Body of pancreas (tissue), 4 donors: ENCODE measurements at regions of chr16 and their contacts with region 1.

Region 1: DNA sequence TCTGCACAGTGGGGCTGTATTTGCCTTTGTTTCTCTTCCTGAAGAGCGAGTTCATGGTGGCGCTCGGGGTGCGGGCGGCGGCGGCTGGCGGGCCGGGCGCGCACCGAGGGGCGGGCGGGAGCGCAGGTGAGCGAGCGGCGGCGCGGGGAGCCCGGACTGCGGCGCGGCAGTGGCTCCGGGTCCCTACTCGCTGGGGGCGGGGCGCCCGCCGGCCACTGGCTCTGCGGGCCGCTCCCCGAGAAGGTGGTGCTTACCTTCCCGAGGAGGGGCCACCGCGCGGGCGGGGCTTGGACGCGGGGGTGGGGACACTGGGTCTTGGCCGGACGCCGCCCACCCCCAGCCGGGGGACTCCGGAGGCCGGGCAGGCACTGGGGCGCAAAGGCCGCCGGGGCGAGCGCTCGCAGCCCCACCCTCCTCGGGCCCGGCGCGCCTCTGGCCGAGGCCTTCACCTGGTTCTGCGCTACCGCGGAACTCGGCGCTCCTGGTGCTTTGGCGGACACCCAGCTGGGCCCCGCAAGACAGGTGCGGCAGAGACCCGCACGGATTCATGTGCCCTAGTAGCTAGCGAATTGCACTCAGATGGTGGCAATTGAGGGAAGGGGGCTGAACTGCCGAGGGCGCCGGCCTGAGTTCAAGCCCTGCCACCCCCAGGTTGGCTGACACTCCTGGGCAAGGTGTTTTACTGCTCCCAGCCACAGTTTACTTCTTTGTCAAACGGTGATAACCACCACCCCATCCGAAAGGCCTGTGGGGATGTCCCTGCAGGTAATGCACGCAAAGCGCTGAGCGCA is at the start of gene PPL:
- DNase-seq: peak; percentile 96 to 98 (median 96)
- ATAC-seq: peak; percentile 92
- H3K4me3 ChIP-seq: peak within 1 kb of the TSS; percentile 46 to 77
- H3K27ac ChIP-seq: peak within 1 kb of the TSS; percentile 70 to 89 (median 81)
- H3K4me1 ChIP-seq: peaks cover 42% of the 10 kb centered on the region
- H3K27me3 ChIP-seq: no peaks in the 10 kb centered on the region
- CTCF ChIP-seq: peak in 1 of 7 experiments; percentile 1
- POLR2A ChIP-seq: peak; percentile 60 to 78 (median 71)
- total RNA-seq, gene PPL: 20.2 to 26.0 TPM

Region 2: DNA sequence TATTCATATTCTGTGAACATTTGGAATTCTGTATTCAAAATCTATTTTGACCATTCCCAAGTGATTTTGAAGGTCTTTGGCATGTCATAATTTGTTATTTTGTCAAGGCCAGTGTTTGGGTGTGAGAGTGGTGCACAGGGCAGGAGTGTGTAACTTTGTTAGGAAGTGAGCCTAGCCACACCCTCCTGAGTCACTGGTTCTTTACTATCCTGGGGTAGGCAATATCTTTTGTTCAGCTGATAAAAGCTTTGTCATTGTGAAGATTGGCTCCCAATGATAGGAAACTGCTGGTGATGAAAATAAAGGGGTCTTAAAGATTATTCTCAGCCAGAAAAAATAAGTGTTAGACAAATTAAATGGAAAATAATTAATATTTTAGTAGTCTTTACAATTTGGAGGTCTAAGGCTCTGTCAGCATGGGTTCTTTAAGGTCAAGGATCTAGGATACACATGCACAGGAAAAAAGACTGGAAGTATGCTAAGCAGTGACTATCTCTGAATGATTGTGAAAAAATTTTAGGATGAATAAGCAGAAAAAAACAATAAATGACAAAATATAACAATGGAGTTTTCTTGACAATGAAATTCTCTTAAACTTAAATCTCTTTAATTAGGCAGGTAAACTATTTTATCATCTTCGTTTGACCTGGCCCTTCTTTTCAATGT is 84.8 kb before region 1 on chr16:
- intact Hi-C with region 1: loop called (anchors 10 kb)
- DNase-seq: no peak
- ATAC-seq: no peak
- H3K4me3 ChIP-seq: no peak overlapping the region
- H3K27ac ChIP-seq: no peak overlapping the region
- H3K4me1 ChIP-seq: peaks cover 34% of the 10 kb centered on the region
- H3K27me3 ChIP-seq: no peaks in the 10 kb centered on the region
- CTCF ChIP-seq: no peak
- POLR2A ChIP-seq: no peak